ENCODE measurements at regions of chr3 and their contacts with region 1.

Region 1: GRCh38 chr3:44198284-44199269 is 43.1 kb upstream of the TOPAZ1 start:
- DNase-seq: peak; percentile 76
- CTCF ChIP-seq: peak; percentile 88

Region 2: GRCh38 chr3:43559963-43560362 is 638.6 kb before region 1 on chr3:
- in situ Hi-C with region 1: loop called (anchors 25 kb)
- DNase-seq: no peak
- CTCF ChIP-seq: no peak

Region 3: DNA sequence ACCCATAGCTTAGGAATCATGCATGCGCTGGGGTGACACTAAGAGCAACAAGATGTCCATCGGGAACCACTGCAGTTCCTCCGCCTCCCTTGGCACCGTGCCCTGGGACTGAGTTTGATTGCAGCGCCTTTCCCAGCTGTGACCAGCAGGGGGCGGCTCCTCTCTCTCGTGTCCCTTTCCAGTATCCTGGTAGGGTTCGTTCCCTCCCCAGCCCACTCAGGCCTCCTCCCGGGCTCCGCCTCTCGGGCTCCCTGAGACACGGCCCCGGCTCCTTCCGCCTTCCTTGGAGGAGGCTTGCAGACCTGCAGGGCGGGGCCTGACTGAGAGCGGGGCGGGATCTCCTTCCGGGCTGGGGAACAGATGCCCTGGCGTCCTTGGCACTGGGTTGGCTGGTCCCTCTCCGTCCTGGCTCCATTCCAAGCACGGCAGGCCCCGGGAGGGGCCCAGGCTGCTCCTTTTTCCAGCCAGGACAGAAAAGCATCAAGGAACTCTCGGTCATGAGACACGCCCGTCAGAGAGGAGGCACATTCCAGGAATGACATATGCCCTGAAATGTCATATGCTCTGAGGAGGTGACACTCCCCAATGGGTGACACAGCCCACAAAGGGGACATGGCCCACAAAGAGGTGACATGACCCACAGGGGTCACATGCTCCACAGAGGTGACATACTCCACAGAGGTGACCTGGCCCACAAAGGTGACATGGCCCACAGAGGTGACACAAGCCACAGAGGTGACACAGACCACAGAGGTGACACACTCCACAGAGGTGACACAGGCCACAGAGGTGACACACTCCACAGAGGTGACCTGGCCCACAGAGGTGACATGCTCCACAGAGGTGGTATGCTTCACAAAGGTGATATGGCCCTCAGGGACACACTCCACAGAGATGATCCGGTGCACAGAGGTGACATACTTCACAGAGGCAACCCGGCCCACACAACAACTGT is 428.8 kb before region 1 on chr3:
- in situ Hi-C with region 1: loop called (anchors 5 kb)
- DNase-seq: peak; percentile 79
- CTCF ChIP-seq: peak; percentile 92

Region 4: DNA sequence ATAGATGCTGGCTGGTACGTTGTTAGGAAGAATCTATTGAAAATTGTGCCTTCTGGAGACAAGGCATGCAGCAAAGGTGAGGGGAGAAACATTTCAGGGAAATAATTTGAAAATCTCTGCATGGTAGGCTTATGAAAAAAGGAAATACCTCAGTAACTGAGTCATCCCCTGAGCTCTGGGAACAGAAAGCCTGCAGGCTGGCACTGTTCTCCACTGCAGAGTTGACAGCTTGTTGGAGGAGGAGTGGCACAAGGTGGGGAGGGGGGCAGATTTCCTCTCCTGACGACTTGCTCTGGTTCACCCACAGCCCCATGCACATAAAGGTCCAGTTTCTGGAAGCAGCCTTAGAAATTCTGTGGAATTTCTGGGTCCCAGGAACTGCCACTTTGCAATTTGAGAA is 328.5 kb before region 1 on chr3:
- in situ Hi-C with region 1: no loop called
- DNase-seq: no peak
- CTCF ChIP-seq: no peak

Region 5: GRCh38 chr3:44248152-44248551 is 49.6 kb after region 1 on chr3:
- in situ Hi-C with region 1: no loop called
- DNase-seq: no peak
- CTCF ChIP-seq: no peak